ENCODE measurements at regions of chr18 and their contacts with region 1.

Region 1: DNA sequence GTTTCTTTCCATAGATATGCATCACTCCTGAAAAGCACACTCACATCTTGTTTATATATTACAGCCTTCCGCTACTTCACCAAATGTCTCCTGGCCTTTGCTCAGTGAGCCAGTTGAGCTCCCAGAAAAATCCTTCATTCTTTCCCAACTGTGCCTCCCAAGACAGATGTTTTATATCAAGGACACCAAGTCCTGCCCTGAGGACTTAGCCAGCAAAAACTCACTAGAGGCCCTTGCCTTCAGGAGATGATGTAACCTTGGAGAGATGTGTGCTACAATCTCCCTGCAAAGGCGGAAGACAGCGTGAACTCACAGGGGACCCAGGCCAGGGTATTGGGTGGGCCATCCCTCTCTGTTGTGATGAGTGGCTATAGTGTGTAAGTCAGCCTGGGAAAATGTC is 86.1 kb upstream of the CTAGE1 start:
- DNase-seq: peak in 4 of 5 donors; percentile 51 to 77 (median 60)
- ATAC-seq: peak; percentile 81 to 95 (median 94)
- H3K4me3 ChIP-seq: no peak overlapping the region
- H3K27ac ChIP-seq: peak overlapping the region in 9 of 12 donors; percentile 29 to 68 (median 50)
- H3K4me1 ChIP-seq: peaks cover 0 to 31% (median 9%) of the 10 kb centered on the region in 12 donors
- H3K27me3 ChIP-seq: no peaks in the 10 kb centered on the region
- CTCF ChIP-seq: no peak
- POLR2A ChIP-seq: no peak

Region 2: GRCh38 chr18:22485808-22486244 is 18.0 kb before region 1 on chr18:
- intact Hi-C with region 1: loop called in 1 of 10 experiments (anchors 1 kb)
- DNase-seq: no peak
- ATAC-seq: no peak
- H3K4me3 ChIP-seq: no peak overlapping the region
- H3K27ac ChIP-seq: no peak overlapping the region
- H3K4me1 ChIP-seq: peaks cover 0 to 29% (median 6%) of the 10 kb centered on the region in 12 donors
- H3K27me3 ChIP-seq: no peaks in the 10 kb centered on the region
- CTCF ChIP-seq: no peak
- POLR2A ChIP-seq: no peak

Region 3: GRCh38 chr18:22542401-22542835 is 38.6 kb after region 1 on chr18:
- intact Hi-C with region 1: loop called in 1 of 10 experiments (anchors 5 kb)
- DNase-seq: peak in 3 of 5 donors; percentile 37 to 64 (median 47)
- ATAC-seq: peak; percentile 22 to 72 (median 40)
- H3K4me3 ChIP-seq: no peak overlapping the region
- H3K27ac ChIP-seq: peak overlapping the region in 8 of 12 donors; percentile 2 to 58 (median 24)
- H3K4me1 ChIP-seq: peaks cover 0 to 61% (median 22%) of the 10 kb centered on the region in 12 donors
- H3K27me3 ChIP-seq: no peaks in the 10 kb centered on the region
- CTCF ChIP-seq: no peak
- POLR2A ChIP-seq: no peak

Region 4: GRCh38 chr18:22567794-22568193 is 64.0 kb after region 1 on chr18:
- intact Hi-C with region 1: no loop called
- DNase-seq: no peak
- ATAC-seq: no peak
- H3K4me3 ChIP-seq: no peak overlapping the region
- H3K27ac ChIP-seq: no peak overlapping the region
- H3K4me1 ChIP-seq: peaks cover 0 to 10% (median 4%) of the 10 kb centered on the region in 12 donors
- H3K27me3 ChIP-seq: no peaks in the 10 kb centered on the region
- CTCF ChIP-seq: no peak
- POLR2A ChIP-seq: no peak

Region 5: GRCh38 chr18:22609642-22610041 is 105.8 kb after region 1 on chr18:
- intact Hi-C with region 1: no loop called
- DNase-seq: peak; percentile 67 to 79 (median 76)
- ATAC-seq: peak; percentile 25 to 60 (median 49)
- H3K4me3 ChIP-seq: no peak overlapping the region
- H3K27ac ChIP-seq: peak overlapping the region; percentile 12 to 74 (median 50)
- H3K4me1 ChIP-seq: peaks cover 0 to 58% (median 30%) of the 10 kb centered on the region in 12 donors
- H3K27me3 ChIP-seq: no peaks in the 10 kb centered on the region
- CTCF ChIP-seq: no peak
- POLR2A ChIP-seq: no peak

Region 6: DNA sequence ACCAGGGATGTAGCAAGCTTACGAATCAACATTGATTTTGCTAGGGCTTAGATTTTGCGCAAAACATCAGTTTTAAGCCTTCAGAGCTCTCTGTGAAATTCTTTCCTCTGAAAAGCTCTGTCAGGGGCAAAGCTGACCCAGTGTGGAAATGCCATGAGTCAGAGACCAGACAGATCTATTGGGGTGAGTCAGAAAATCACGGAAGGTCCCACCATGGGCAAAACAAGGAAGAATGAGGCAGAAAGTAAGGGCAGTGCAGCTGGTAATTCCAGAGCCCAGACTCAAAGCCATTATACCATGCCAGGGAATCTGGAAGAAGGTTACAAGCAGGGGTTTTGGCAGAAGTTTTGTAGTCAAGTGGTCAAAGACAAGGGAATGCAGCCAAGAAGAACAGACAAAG is 170.5 kb after region 1 on chr18:
- intact Hi-C with region 1: no loop called
- DNase-seq: no peak
- ATAC-seq: no peak
- H3K4me3 ChIP-seq: no peak overlapping the region
- H3K27ac ChIP-seq: no peak overlapping the region
- H3K4me1 ChIP-seq: no peaks in the 10 kb centered on the region
- H3K27me3 ChIP-seq: no peaks in the 10 kb centered on the region
- CTCF ChIP-seq: no peak
- POLR2A ChIP-seq: no peak

Region 7: GRCh38 chr18:22822024-22822423 is 318.2 kb after region 1 on chr18:
- intact Hi-C with region 1: no loop called
- DNase-seq: no peak
- ATAC-seq: no peak
- H3K4me3 ChIP-seq: no peak overlapping the region
- H3K27ac ChIP-seq: no peak overlapping the region
- H3K4me1 ChIP-seq: no peaks in the 10 kb centered on the region
- H3K27me3 ChIP-seq: no peaks in the 10 kb centered on the region
- CTCF ChIP-seq: no peak
- POLR2A ChIP-seq: no peak